PC-3 (cell line): ENCODE measurements at regions of chr2 and their contacts with region 1.

Region 1: DNA sequence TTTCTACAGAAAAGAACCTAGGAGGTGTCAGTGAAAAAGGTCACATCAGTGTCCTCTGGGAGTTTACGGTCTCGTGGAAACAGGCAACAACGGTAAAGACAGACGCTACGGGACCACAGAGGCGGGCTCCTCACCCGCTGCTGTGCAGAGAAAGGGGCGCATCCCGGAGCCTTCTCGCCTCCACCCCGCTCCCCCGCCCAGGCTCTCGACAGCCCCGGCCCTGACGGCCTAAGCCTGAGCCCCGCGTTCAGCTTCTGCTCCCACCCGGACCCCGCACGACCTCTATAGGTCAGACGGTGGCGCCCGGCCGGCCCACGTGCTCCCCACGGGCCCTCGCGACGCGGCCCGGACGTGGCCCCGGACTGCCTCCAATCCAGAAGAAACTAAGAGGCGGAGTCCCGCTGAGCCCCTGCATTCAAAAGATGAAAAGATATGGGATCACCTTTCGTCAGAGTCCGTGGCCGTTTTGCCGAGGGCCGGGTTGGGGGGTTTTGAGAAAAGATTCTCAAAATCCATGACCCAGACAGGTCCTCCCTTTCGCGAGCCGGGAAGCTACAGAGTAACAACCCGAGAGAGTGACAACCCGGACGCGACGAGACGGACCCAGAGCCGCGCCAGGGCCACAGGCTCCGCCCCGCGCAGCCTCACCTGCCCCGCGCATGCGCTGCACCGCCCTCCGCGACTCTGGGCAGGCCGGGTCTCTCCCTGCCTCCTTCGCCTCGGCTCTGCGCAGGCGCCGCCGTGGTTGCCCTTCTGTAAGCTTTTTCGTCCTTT is at the start of gene ZC3H8:
- DNase-seq: peak; percentile 93
- ATAC-seq: peak; percentile 97
- H3K4me3 ChIP-seq: peak within 1 kb of the TSS; percentile 88
- H3K27ac ChIP-seq: peak within 1 kb of the TSS; percentile 39
- H3K4me1 ChIP-seq: peaks cover 18% of the 10 kb centered on the region
- H3K27me3 ChIP-seq: no peaks in the 10 kb centered on the region
- CTCF ChIP-seq: no peak; the same call in 1 of the 2 replicates
- total RNA-seq, gene ZC3H8: 13.1 and 17.0 TPM in 2 replicates

Region 2: DNA sequence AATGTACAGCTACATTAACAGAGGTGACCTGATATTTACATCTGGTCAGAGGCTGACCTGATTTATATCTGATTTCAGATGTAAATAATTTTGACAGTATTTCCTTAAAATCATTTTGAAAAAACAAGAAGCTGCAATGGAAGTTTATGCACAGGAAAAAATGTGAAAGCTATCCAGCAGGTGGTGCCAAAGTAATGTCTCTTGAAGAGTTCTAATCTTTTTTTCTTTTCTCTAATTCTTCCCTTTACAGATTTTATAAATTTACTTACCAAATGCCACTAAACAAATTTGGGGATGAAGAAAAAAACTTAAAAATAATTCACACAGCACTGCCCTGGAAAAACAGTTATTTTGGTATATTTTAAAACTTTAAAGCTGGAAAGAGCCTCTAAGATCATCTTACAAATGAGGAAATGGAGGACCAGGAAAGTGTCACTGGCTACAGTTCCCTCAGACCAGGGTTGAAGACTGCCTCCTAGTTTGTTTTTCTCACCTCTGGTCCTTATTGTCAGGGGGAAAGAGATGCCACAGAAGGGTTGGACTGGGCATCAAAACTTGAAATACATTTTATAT is 132.9 kb before region 1 on chr2:
- CTCF ChIA-PET with region 1: interaction called, 3 read pairs
- POLR2A ChIA-PET with region 1: no interaction called
- intact Hi-C with region 1: loop called (anchors 5 kb)
- DNase-seq: peak; percentile 69
- ATAC-seq: no peak
- H3K4me3 ChIP-seq: no peak overlapping the region
- H3K27ac ChIP-seq: no peak overlapping the region
- H3K4me1 ChIP-seq: no peaks in the 10 kb centered on the region
- H3K27me3 ChIP-seq: no peaks in the 10 kb centered on the region
- CTCF ChIP-seq: peak; percentile 82

Region 3: GRCh38 chr2:112301171-112301584 is 46.5 kb after region 1 on chr2:
- CTCF ChIA-PET with region 1: no interaction called
- POLR2A ChIA-PET with region 1: no interaction called
- intact Hi-C with region 1: no loop called
- DNase-seq: no peak
- ATAC-seq: no peak
- H3K4me3 ChIP-seq: no peak overlapping the region
- H3K27ac ChIP-seq: no peak overlapping the region
- H3K4me1 ChIP-seq: no peaks in the 10 kb centered on the region
- H3K27me3 ChIP-seq: no peaks in the 10 kb centered on the region
- CTCF ChIP-seq: no peak

Region 4: GRCh38 chr2:112433932-112434730 is 179.5 kb after region 1 on chr2:
- CTCF ChIA-PET with region 1: interaction called, 7 read pairs
- POLR2A ChIA-PET with region 1: no interaction called
- intact Hi-C with region 1: loop called (anchors 10 kb)
- DNase-seq: no peak
- ATAC-seq: no peak
- H3K4me3 ChIP-seq: no peak overlapping the region
- H3K27ac ChIP-seq: no peak overlapping the region
- H3K4me1 ChIP-seq: no peaks in the 10 kb centered on the region
- H3K27me3 ChIP-seq: no peaks in the 10 kb centered on the region
- CTCF ChIP-seq: no peak

Region 5: GRCh38 chr2:112584134-112584890 is 329.7 kb after region 1 on chr2 and contains the start of gene CHCHD5:
- CTCF ChIA-PET with region 1: no interaction called
- POLR2A ChIA-PET with region 1: no interaction called
- intact Hi-C with region 1: loop called (anchors 5 kb)
- DNase-seq: peak; percentile 94
- ATAC-seq: peak; percentile 83
- H3K4me3 ChIP-seq: peak within 1 kb of the TSS; percentile 86
- H3K27ac ChIP-seq: peak within 1 kb of the TSS; percentile 95
- H3K4me1 ChIP-seq: peaks cover 31% of the 10 kb centered on the region
- H3K27me3 ChIP-seq: no peaks in the 10 kb centered on the region
- CTCF ChIP-seq: no peak
- total RNA-seq, gene CHCHD5: 25.4 and 27.9 TPM in 2 replicates